T-cell (primary cell): ENCODE measurements at regions of chr15 and their contacts with region 1.

Region 1: DNA sequence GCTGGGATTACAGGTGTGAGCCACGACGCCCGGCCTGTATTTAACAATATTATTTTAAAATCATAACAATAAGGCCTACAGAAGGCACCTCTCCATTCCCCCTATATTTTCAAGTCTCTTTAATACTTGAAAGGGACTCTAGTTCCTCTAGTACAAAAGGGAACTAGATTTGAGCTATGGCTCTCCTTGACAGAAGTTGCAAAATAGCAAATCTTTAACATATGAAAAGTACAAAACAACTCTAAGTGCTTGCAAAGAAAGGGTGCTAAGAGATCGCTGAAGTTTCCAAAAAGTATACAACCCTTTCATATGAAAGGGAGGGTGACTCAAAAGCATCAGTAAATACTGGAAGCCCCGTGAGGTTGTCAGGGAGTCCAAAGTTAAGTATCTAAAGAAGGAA is 23.8 kb downstream of the AP3S2 start:
- DNase-seq: no peak
- ATAC-seq: no peak
- H3K4me3 ChIP-seq: no peak overlapping the region
- H3K4me3 Mint-ChIP-seq: no peak overlapping the region
- H3K27ac ChIP-seq: no peak overlapping the region
- H3K27ac Mint-ChIP-seq: no peak overlapping the region
- H3K4me1 ChIP-seq: peaks cover 0 to 3% of the 10 kb centered on the region in 2 experiments
- H3K4me1 Mint-ChIP-seq: peaks cover 1 to 3% (median 3%) of the 10 kb centered on the region in 3 donors
- H3K27me3 ChIP-seq: no peaks in the 10 kb centered on the region
- H3K27me3 Mint-ChIP-seq: no peaks in the 10 kb centered on the region

Region 2: GRCh38 chr15:89034288-89034687 is 835.7 kb before region 1 on chr15:
- CTCF ChIA-PET with region 1: no interaction called
- POLR2A ChIA-PET with region 1: no interaction called
- DNase-seq: peak in 1 of 35 experiments; percentile 25
- ATAC-seq: no peak
- H3K4me3 ChIP-seq: no peak overlapping the region
- H3K4me3 Mint-ChIP-seq: no peak overlapping the region
- H3K27ac ChIP-seq: no peak overlapping the region
- H3K27ac Mint-ChIP-seq: no peak overlapping the region
- H3K4me1 ChIP-seq: no peaks in the 10 kb centered on the region
- H3K4me1 Mint-ChIP-seq: peaks cover 0 to 5% (median 0%) of the 10 kb centered on the region in 3 donors
- H3K27me3 ChIP-seq: no peaks in the 10 kb centered on the region
- H3K27me3 Mint-ChIP-seq: peaks cover 11 to 14% of the 10 kb centered on the region in 2 donors

Region 3: DNA sequence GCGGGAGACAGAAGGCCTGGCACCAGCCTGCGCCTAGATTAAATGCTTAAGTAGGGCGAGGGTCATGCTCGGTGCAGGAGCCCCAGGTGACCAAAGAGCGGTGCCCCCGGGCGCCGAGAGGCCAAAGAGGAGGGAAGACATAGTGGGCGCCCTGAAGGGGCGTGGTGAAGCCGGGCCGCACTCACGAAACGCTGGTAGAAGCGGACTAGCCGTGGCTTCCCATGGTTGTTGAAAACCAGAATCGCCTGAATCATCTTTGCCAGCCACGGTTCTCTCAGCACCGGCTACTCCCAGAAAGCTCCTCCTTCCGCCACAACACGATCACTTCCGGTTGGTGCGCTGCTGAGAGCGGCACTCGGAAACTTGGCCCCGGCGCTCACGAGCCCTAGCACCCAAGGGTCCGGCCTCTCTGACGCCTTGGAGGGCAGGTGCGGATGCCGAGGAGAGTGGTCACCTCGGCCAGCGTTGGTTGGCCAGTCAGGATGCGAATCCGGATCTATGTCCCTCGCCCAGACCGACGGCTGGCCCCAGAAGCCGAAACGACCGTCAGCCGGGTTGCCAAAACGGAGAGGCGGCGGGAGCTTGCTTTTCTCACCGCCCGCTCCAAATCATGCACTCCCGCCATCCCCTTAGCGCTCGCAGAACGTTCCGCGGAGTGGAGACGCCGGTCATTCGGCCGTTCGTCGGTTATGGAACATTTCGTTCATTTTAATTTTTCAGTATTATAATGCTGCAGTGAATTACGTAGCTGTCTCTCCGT is 23.9 kb after region 1 on chr15 and contains the start of gene AP3S2:
- CTCF ChIA-PET with region 1: interaction called, 3 to 27 read pairs
- POLR2A ChIA-PET with region 1: interaction called in 1 of 2 experiments, 12 read pairs
- DNase-seq: peak; percentile 74 to 92 (median 85)
- ATAC-seq: peak; percentile 94 to 97 (median 94)
- H3K4me3 ChIP-seq: peak within 1 kb of the TSS; percentile 95 to 99
- H3K4me3 Mint-ChIP-seq: peak within 1 kb of the TSS; percentile 95 to 98 (median 96)
- H3K27ac ChIP-seq: peak within 1 kb of the TSS; percentile 88
- H3K27ac Mint-ChIP-seq: peak within 1 kb of the TSS; percentile 95
- H3K4me1 ChIP-seq: peaks cover 13 to 28% of the 10 kb centered on the region in 2 experiments
- H3K4me1 Mint-ChIP-seq: peaks cover 42 to 50% (median 48%) of the 10 kb centered on the region in 3 donors
- H3K27me3 ChIP-seq: no peaks in the 10 kb centered on the region
- H3K27me3 Mint-ChIP-seq: no peaks in the 10 kb centered on the region
- total RNA-seq, gene AP3S2: 22.8 to 30.5 (median 24.9) TPM